Naive thymus-derived CD4-positive, alpha-beta T cell (primary cell): ENCODE measurements at regions of chr5 and their contacts with region 1.

Region 1: GRCh38 chr5:67246108-67246507 is 49.5 kb upstream of the CD180 start:
- DNase-seq: peak in 7 of 9 donors; percentile 43 to 70 (median 64)
- ATAC-seq: peak; percentile 57
- H3K4me3 ChIP-seq: no peak overlapping the region
- H3K4me3 Mint-ChIP-seq: no peak overlapping the region
- H3K27ac ChIP-seq: no peak overlapping the region
- H3K27ac Mint-ChIP-seq: no peak overlapping the region
- H3K4me1 ChIP-seq: peaks cover 5 to 8% of the 10 kb centered on the region in 2 donors
- H3K4me1 Mint-ChIP-seq: peaks cover 2 to 22% (median 19%) of the 10 kb centered on the region in 7 donors
- H3K27me3 ChIP-seq: no peaks in the 10 kb centered on the region
- H3K27me3 Mint-ChIP-seq: peaks cover 0 to under 1% (median 0%) of the 10 kb centered on the region in 5 donors

Region 2: DNA sequence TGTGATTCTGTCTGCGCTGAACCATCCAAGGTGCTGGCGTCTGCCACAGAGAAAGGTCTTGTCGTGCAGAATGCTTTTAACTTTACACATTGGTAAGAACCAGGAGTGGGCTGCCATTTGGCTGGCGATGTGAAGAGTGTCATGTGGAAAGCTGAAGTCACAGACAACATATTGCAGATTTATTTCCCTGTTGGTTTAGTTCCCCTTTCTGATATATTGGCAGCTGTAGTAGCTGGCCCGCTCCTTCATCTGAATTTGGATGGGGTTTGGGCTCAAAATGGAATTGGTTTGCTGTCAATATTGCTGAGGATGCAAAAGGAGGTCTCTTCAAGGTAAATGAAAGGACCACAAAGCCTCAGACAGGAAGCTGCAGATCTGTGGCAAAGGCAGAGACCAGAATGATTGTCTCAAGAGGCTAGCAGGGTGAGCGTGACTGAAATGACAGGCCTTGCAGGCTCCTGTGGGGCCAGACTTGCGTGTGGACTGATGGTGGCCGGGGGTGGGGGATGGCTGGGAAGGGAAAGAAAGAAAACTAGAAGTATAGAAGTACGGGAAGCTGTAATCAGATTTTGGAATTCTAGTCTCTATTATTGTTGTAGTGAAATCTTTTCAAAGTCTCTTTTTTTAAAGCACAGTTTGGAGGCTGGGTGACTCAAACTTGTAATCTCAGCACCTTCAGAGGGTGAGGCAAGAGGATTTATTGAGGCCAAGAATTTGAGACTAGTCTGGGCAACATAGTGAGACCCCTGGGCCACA is 24.4 kb before region 1 on chr5:
- CTCF ChIA-PET with region 1: interaction called, 12 read pairs
- POLR2A ChIA-PET with region 1: interaction called, 5 read pairs
- intact Hi-C with region 1: no loop called
- DNase-seq: peak in 6 of 9 donors; percentile 33 to 48 (median 40)
- ATAC-seq: peak; percentile 85
- H3K4me3 ChIP-seq: peak overlapping the region; percentile 33
- H3K4me3 Mint-ChIP-seq: peak overlapping the region; percentile 63 to 80 (median 71)
- H3K27ac ChIP-seq: peak overlapping the region; percentile 24
- H3K27ac Mint-ChIP-seq: peak overlapping the region; percentile 61 to 99 (median 91)
- H3K4me1 ChIP-seq: peaks cover 44 to 47% of the 10 kb centered on the region in 2 donors
- H3K4me1 Mint-ChIP-seq: peaks cover 42 to 74% (median 66%) of the 10 kb centered on the region in 7 donors
- H3K27me3 ChIP-seq: no peaks in the 10 kb centered on the region
- H3K27me3 Mint-ChIP-seq: peaks cover 0 to 4% (median 0%) of the 10 kb centered on the region in 5 donors

Region 3: GRCh38 chr5:67855523-67855922 is 609.4 kb after region 1 on chr5:
- CTCF ChIA-PET with region 1: no interaction called
- POLR2A ChIA-PET with region 1: no interaction called
- intact Hi-C with region 1: loop called in 1 of 2 experiments (anchors 10 kb)
- DNase-seq: no peak
- ATAC-seq: no peak
- H3K4me3 ChIP-seq: no peak overlapping the region
- H3K4me3 Mint-ChIP-seq: no peak overlapping the region
- H3K27ac ChIP-seq: no peak overlapping the region
- H3K27ac Mint-ChIP-seq: no peak overlapping the region
- H3K4me1 ChIP-seq: no peaks in the 10 kb centered on the region
- H3K4me1 Mint-ChIP-seq: no peaks in the 10 kb centered on the region
- H3K27me3 ChIP-seq: no peaks in the 10 kb centered on the region
- H3K27me3 Mint-ChIP-seq: peaks cover 0 to 6% (median 0%) of the 10 kb centered on the region in 5 donors

Region 4: GRCh38 chr5:68246802-68247201 is 1000.7 kb after region 1 on chr5:
- CTCF ChIA-PET with region 1: interaction called, 33 read pairs
- POLR2A ChIA-PET with region 1: interaction called, 3 read pairs
- intact Hi-C with region 1: loop called (anchors 1 kb)
- DNase-seq: peak in 6 of 9 donors; percentile 29 to 60 (median 46)
- ATAC-seq: no peak
- H3K4me3 ChIP-seq: no peak overlapping the region
- H3K4me3 Mint-ChIP-seq: peak overlapping the region in 3 of 10 donors; percentile 7 to 25 (median 16)
- H3K27ac ChIP-seq: no peak overlapping the region
- H3K27ac Mint-ChIP-seq: peak overlapping the region in 7 of 9 donors; percentile 18 to 67 (median 65)
- H3K4me1 ChIP-seq: peaks cover 36 to 59% of the 10 kb centered on the region in 2 donors
- H3K4me1 Mint-ChIP-seq: peaks cover 58 to 94% (median 88%) of the 10 kb centered on the region in 7 donors
- H3K27me3 ChIP-seq: no peaks in the 10 kb centered on the region
- H3K27me3 Mint-ChIP-seq: no peaks in the 10 kb centered on the region

Region 5: GRCh38 chr5:68272289-68272688 is 1026.2 kb after region 1 on chr5:
- CTCF ChIA-PET with region 1: interaction called, 18 read pairs
- POLR2A ChIA-PET with region 1: interaction called, 4 read pairs
- intact Hi-C with region 1: loop called (anchors 1 to 2 kb)
- DNase-seq: peak in 3 of 9 donors; percentile 32 to 45 (median 37)
- ATAC-seq: no peak
- H3K4me3 ChIP-seq: no peak overlapping the region
- H3K4me3 Mint-ChIP-seq: peak overlapping the region in 2 of 10 donors; percentile 13 to 17
- H3K27ac ChIP-seq: no peak overlapping the region
- H3K27ac Mint-ChIP-seq: peak overlapping the region in 8 of 9 donors; percentile 4 to 95 (median 58)
- H3K4me1 ChIP-seq: peaks cover 68 to 80% of the 10 kb centered on the region in 2 donors
- H3K4me1 Mint-ChIP-seq: peaks cover 33 to 92% (median 80%) of the 10 kb centered on the region in 7 donors
- H3K27me3 ChIP-seq: no peaks in the 10 kb centered on the region
- H3K27me3 Mint-ChIP-seq: no peaks in the 10 kb centered on the region

Region 6: DNA sequence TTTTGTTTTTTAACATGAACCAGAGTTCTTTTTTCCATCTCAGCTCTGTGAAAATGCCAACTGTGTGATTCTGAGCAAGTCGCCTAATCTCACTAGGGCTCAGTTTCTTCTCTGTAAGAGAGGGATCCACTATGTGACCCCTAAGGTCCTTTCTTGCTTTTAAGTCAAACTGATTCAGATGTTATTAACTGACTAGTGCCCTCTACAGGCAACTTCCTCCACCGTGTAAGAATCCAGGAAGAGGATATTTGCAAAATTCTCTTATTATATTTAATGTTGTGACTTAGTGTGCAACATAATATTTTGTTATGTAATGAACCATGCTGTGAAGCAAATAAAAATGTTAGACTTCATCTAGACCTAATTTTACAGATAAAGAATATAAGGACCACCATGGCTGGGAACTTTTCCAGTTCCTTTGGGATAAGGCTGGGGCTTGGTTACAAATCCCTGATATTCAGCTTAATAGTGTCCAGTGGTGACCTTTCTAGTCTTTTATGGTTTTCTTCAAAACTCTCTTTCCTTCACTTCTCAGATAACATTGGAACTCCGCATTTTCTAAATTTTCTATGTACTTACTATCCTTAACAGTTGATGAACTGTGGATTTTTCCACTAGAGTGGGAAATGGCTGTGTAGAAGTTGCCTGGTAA is 1214.2 kb after region 1 on chr5:
- CTCF ChIA-PET with region 1: interaction called, 3 read pairs
- POLR2A ChIA-PET with region 1: no interaction called
- intact Hi-C with region 1: loop called (anchors 1 to 10 kb)
- DNase-seq: peak in 7 of 9 donors; percentile 29 to 59 (median 44)
- ATAC-seq: peak; percentile 77
- H3K4me3 ChIP-seq: no peak overlapping the region
- H3K4me3 Mint-ChIP-seq: no peak overlapping the region
- H3K27ac ChIP-seq: no peak overlapping the region
- H3K27ac Mint-ChIP-seq: peak overlapping the region in 1 of 9 donors; percentile 20
- H3K4me1 ChIP-seq: peaks cover 0 to 13% of the 10 kb centered on the region in 2 donors
- H3K4me1 Mint-ChIP-seq: peaks cover 4 to 21% (median 13%) of the 10 kb centered on the region in 7 donors
- H3K27me3 ChIP-seq: no peaks in the 10 kb centered on the region
- H3K27me3 Mint-ChIP-seq: peaks cover 0 to under 1% (median 0%) of the 10 kb centered on the region in 5 donors